MCF 10A (cell line): ENCODE measurements at regions of chr5 and their contacts with region 1.

Region 1: DNA sequence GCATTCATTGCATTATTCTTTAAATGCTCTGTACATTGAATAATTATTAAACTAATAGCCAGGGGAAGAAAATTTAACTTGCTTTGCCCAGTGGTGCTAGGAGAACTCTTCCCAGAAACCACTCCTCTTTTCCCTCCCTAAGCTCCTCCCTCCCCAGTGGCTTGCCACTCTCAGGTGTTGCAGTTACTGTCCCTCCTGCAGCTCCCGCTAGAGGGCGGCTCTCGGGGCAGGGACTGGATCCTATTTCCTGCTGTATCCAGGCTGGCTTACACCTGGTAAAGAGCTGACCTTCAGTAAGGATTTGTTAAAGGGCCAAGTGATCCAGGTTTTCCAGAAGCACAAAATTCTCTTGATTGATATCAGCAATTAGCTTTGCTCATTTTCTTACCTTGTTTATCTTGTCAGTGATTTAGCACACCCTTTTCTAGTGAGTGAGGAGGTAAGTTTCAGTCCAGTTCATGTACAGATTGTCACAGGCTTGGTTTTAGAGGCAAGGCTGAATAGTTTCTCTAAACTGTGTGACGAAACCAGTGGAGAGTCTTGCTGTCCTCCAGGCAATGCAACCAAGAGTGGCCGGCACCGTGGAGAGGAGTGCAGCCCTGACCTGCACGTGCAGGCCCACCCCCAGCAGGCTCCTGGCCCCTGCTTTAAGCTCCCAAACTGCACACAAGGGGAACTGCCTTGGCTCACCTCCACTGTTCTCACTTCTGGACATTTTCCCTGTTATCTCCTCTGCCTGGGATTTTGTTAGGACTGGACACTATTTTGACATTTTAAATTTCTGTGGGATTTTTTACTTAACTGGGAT is 423.8 kb downstream of the SPOCK1 start:
- DNase-seq: peak; percentile 93
- H3K4me3 Mint-ChIP-seq: no peak overlapping the region
- H3K27ac Mint-ChIP-seq: no peak overlapping the region
- H3K4me1 Mint-ChIP-seq: peaks cover 39% of the 10 kb centered on the region
- H3K27me3 Mint-ChIP-seq: no peaks in the 10 kb centered on the region
- CTCF ChIP-seq: peak; percentile 87

Region 2: DNA sequence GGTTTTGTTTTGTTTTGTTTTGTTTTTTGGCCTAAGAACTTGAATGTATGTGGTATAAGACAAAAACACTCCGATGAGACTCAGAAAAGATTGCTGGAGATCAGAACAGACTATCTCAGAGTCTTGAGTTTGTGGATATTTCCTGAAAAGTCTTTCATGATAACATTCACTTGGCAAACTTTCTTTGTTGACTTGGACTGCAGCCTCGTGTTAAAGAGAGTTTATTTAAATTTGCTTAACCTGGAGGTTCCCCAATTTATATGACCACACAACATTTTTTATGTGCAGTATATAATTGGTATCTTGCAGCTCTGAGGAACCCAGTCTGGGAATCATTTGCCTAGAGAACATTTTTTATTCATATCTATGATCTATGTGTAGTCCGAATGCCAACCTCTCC is 62.1 kb before region 1 on chr5:
- CTCF ChIA-PET with region 1: no interaction called
- POLR2A ChIA-PET with region 1: no interaction called
- intact Hi-C with region 1: no loop called
- DNase-seq: no peak
- H3K4me3 Mint-ChIP-seq: no peak overlapping the region
- H3K27ac Mint-ChIP-seq: no peak overlapping the region
- H3K4me1 Mint-ChIP-seq: no peaks in the 10 kb centered on the region
- H3K27me3 Mint-ChIP-seq: no peaks in the 10 kb centered on the region
- CTCF ChIP-seq: no peak

Region 3: GRCh38 chr5:137032929-137033328 is 42.4 kb before region 1 on chr5:
- CTCF ChIA-PET with region 1: no interaction called
- POLR2A ChIA-PET with region 1: no interaction called
- intact Hi-C with region 1: no loop called
- DNase-seq: no peak
- H3K4me3 Mint-ChIP-seq: no peak overlapping the region
- H3K27ac Mint-ChIP-seq: no peak overlapping the region
- H3K4me1 Mint-ChIP-seq: no peaks in the 10 kb centered on the region
- H3K27me3 Mint-ChIP-seq: no peaks in the 10 kb centered on the region
- CTCF ChIP-seq: no peak

Region 4: GRCh38 chr5:137061382-137061781 is 14.0 kb before region 1 on chr5:
- CTCF ChIA-PET with region 1: interaction called, 14 read pairs
- POLR2A ChIA-PET with region 1: no interaction called
- intact Hi-C with region 1: no loop called
- DNase-seq: no peak
- H3K4me3 Mint-ChIP-seq: no peak overlapping the region
- H3K27ac Mint-ChIP-seq: no peak overlapping the region
- H3K4me1 Mint-ChIP-seq: no peaks in the 10 kb centered on the region
- H3K27me3 Mint-ChIP-seq: no peaks in the 10 kb centered on the region
- CTCF ChIP-seq: no peak

Region 5: DNA sequence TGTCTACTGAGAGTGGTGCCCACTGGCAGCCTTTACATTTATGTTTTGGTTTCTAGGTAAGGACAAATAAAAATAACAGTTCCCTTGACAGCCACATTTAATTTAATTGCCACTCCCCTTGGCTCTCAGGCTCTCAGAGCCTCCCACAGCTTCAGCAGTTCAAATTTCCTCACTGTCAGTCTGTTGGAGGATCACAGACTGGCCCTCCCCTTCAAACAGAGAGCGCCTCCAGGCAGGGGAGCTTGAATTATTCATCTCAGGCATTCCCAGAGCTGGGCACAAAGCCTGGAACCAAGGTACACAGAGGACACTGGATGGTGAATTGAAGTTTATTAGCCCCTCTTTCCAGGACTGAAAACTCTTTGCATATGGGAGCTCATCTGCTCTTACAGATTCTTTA is 16.1 kb after region 1 on chr5:
- CTCF ChIA-PET with region 1: interaction called, 26 read pairs
- POLR2A ChIA-PET with region 1: interaction called, 4 read pairs
- intact Hi-C with region 1: no loop called
- DNase-seq: peak; percentile 74
- H3K4me3 Mint-ChIP-seq: no peak overlapping the region
- H3K27ac Mint-ChIP-seq: peak overlapping the region; percentile 65
- H3K4me1 Mint-ChIP-seq: peaks cover 29% of the 10 kb centered on the region
- H3K27me3 Mint-ChIP-seq: no peaks in the 10 kb centered on the region
- CTCF ChIP-seq: no peak

Region 6: DNA sequence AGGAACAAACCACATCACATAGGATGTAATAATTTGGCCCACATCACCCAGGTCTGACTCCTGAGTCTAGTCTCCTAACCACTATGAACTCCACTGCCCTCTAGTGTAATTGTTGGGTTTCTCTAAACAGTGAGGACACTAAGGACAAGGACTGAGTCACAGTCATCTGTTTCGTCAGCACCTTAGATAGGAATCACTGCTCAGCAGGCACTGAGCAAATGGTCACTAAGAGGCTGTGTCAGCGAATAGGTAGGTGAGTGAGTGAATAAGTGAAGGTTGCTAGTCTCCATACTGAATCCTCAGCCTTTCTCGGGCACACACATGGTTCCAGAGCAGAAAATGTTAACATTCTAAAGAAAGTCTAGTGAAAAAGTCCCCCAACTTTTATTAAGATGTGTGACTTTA is 145.2 kb after region 1 on chr5:
- CTCF ChIA-PET with region 1: interaction called, 33 read pairs
- POLR2A ChIA-PET with region 1: interaction called, 7 read pairs
- intact Hi-C with region 1: loop called (anchors 1 kb)
- DNase-seq: peak; percentile 96
- H3K4me3 Mint-ChIP-seq: no peak overlapping the region
- H3K27ac Mint-ChIP-seq: no peak overlapping the region
- H3K4me1 Mint-ChIP-seq: peaks cover 30% of the 10 kb centered on the region
- H3K27me3 Mint-ChIP-seq: no peaks in the 10 kb centered on the region
- CTCF ChIP-seq: peak; percentile 76

Region 7: GRCh38 chr5:137310051-137310730 is 234.8 kb after region 1 on chr5:
- CTCF ChIA-PET with region 1: interaction called, 7 read pairs
- POLR2A ChIA-PET with region 1: no interaction called
- intact Hi-C with region 1: loop called (anchors 10 kb)
- DNase-seq: peak; percentile 88
- H3K4me3 Mint-ChIP-seq: peak overlapping the region; percentile 18
- H3K27ac Mint-ChIP-seq: peak overlapping the region; percentile 95
- H3K4me1 Mint-ChIP-seq: peaks cover 28% of the 10 kb centered on the region
- H3K27me3 Mint-ChIP-seq: no peaks in the 10 kb centered on the region
- CTCF ChIP-seq: no peak

Region 8: DNA sequence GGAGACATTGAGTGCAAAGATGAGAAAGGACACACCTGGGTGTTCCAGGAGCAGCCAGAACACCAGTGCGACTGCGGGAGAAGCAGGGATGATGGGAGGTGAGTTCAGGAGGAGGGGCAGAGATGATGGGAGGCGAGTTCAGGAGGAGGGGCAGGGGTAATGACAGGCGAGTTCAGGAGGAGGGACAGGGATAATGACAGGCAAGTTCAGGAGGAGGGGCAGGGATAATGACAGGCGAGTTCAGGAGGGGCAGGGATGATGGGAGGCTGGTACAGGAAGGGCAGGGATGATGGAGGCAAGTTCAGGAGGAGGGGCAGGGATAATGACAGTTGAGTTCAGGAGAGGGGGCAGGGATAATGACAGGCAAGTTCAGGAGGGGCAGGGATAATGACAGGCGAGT is 441.0 kb after region 1 on chr5:
- CTCF ChIA-PET with region 1: no interaction called
- POLR2A ChIA-PET with region 1: no interaction called
- intact Hi-C with region 1: no loop called
- DNase-seq: no peak
- H3K4me3 Mint-ChIP-seq: no peak overlapping the region
- H3K27ac Mint-ChIP-seq: no peak overlapping the region
- H3K4me1 Mint-ChIP-seq: no peaks in the 10 kb centered on the region
- H3K27me3 Mint-ChIP-seq: peaks cover 26% of the 10 kb centered on the region
- CTCF ChIP-seq: no peak